PC-3 (cell line): ENCODE measurements at regions of chr4 and their contacts with region 1.

Region 1: DNA sequence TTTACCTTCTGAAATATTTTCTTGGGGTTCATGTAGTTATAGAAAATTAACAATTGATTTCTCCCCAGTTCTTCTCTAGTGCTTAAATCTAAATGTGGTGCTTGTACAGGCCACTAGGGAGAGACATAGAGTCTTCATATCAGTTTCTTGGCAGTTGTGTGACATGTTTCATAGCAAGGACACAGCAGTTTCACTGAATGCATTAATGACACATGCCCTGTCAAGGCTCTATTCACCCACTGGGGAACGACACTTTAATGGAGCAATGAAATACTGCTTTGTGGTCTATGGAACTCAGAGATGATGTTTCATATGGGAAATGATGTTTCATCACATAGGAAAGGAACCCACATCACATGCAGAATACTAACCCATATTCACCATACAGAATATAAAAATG is 2.8 kb downstream of the VEGFC start:
- DNase-seq: peak; percentile 89
- ATAC-seq: peak; percentile 27
- H3K4me3 ChIP-seq: peak overlapping the region; percentile 98
- H3K27ac ChIP-seq: peak overlapping the region; percentile 100
- H3K4me1 ChIP-seq: peaks cover 49% of the 10 kb centered on the region
- H3K27me3 ChIP-seq: no peaks in the 10 kb centered on the region
- CTCF ChIP-seq: peak; percentile 79

Region 2: DNA sequence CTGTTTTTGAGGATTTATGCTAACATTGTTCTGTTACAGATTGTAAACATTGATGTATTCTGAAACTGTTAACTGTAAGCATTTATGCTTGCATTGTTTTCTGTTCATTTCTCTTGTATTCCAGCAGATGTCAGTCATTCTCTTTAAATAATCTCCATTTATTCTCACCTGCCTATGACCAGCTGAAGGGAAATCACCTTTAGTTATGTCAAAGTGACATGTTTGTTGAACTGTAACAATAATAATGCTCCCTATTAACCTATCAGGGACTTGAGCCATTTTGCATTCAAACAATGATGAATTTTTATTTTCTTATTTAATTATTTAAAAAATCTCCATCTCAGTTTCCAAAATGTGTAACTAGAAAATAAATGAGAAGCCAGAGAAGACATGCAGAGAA is 412.2 kb before region 1 on chr4:
- CTCF ChIA-PET with region 1: no interaction called
- POLR2A ChIA-PET with region 1: no interaction called
- intact Hi-C with region 1: loop called (anchors 1 kb)
- DNase-seq: peak; percentile 59
- ATAC-seq: peak; percentile 63
- H3K4me3 ChIP-seq: no peak overlapping the region
- H3K27ac ChIP-seq: peak overlapping the region; percentile 56
- H3K4me1 ChIP-seq: peaks cover 13% of the 10 kb centered on the region; the same call in 1 of the 2 replicates
- H3K27me3 ChIP-seq: no peaks in the 10 kb centered on the region
- CTCF ChIP-seq: peak; percentile 71

Region 3: DNA sequence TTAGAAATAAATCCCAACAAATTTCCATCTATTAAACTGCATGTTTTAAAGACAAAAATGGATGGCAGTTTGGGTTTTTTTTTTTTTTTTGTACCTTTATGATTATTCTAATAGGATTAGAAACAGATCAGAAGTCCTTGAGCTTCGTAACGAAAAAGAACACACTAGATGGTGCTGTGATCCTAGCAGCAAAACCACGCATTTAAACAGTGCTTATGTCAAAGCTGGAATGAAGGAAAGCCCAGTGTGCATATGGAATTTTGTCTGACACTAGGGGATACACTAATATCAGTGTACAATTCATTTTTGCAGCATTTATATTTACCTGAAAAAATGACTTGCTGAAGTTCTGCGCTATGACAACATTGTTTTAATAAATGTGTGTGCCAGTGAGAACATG is 226.4 kb before region 1 on chr4:
- CTCF ChIA-PET with region 1: no interaction called
- POLR2A ChIA-PET with region 1: no interaction called
- intact Hi-C with region 1: loop called (anchors 5 kb)
- DNase-seq: peak; percentile 54
- ATAC-seq: peak; percentile 53
- H3K4me3 ChIP-seq: no peak overlapping the region
- H3K27ac ChIP-seq: no peak overlapping the region
- H3K4me1 ChIP-seq: peaks cover 14% of the 10 kb centered on the region
- H3K27me3 ChIP-seq: no peaks in the 10 kb centered on the region
- CTCF ChIP-seq: peak; percentile 46

Region 4: GRCh38 chr4:176883681-176884418 is 93.9 kb after region 1 on chr4:
- CTCF ChIA-PET with region 1: no interaction called
- POLR2A ChIA-PET with region 1: interaction called, 3 read pairs
- intact Hi-C with region 1: loop called (anchors 1 kb)
- DNase-seq: peak; percentile 93
- ATAC-seq: peak; percentile 77
- H3K4me3 ChIP-seq: peak overlapping the region; percentile 36
- H3K27ac ChIP-seq: peak overlapping the region; percentile 99
- H3K4me1 ChIP-seq: peaks cover 44% of the 10 kb centered on the region
- H3K27me3 ChIP-seq: no peaks in the 10 kb centered on the region
- CTCF ChIP-seq: no peak

Region 5: GRCh38 chr4:176988226-176988625 is 198.3 kb after region 1 on chr4:
- CTCF ChIA-PET with region 1: no interaction called
- POLR2A ChIA-PET with region 1: no interaction called
- intact Hi-C with region 1: loop called (anchors 2 kb)
- DNase-seq: peak; percentile 96
- ATAC-seq: peak; percentile 100
- H3K4me3 ChIP-seq: no peak overlapping the region
- H3K27ac ChIP-seq: peak overlapping the region; percentile 97
- H3K4me1 ChIP-seq: peaks cover 19% of the 10 kb centered on the region
- H3K27me3 ChIP-seq: no peaks in the 10 kb centered on the region
- CTCF ChIP-seq: no peak

Region 6: DNA sequence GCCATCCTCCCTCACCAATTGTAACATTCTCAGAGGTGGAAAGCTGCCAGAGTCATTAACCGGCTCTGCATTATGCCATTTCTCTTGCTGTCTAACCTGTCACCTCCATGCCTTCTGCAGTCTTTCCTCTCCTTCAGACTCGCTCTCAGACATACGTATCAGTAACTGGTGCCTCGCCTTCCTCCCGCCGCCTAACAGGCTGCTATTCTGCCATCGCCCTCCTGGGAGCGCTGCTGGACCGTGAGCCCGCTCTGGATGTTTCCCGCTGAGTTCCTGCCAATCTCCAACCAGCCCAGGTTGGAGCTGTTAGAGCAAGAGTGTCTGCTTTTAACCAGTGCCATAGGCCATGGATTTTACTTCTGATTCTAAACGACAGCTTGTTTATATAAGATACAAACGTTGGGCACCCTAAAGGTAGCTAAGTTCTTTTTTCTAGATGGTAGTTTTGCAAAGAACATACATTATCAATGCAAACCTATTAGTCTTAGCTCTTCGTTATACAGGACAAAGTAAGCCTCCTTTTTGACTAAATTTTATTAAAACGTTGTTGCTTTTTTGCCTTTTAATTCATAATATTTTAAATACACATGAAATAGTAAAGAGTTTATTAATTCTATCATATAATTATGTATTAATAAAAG is 460.2 kb after region 1 on chr4:
- CTCF ChIA-PET with region 1: no interaction called
- POLR2A ChIA-PET with region 1: no interaction called
- intact Hi-C with region 1: loop called (anchors 5 kb)
- DNase-seq: peak; percentile 69
- ATAC-seq: peak; percentile 88
- H3K4me3 ChIP-seq: no peak overlapping the region
- H3K27ac ChIP-seq: no peak overlapping the region
- H3K4me1 ChIP-seq: peaks cover 16% of the 10 kb centered on the region; the same call in 1 of the 2 replicates
- H3K27me3 ChIP-seq: no peaks in the 10 kb centered on the region
- CTCF ChIP-seq: peak; percentile 90

Region 7: GRCh38 chr4:177480795-177481194 is 690.8 kb after region 1 on chr4:
- CTCF ChIA-PET with region 1: no interaction called
- POLR2A ChIA-PET with region 1: no interaction called
- intact Hi-C with region 1: no loop called
- DNase-seq: no peak
- ATAC-seq: no peak
- H3K4me3 ChIP-seq: no peak overlapping the region
- H3K27ac ChIP-seq: no peak overlapping the region
- H3K4me1 ChIP-seq: peaks cover 13% of the 10 kb centered on the region
- H3K27me3 ChIP-seq: no peaks in the 10 kb centered on the region
- CTCF ChIP-seq: no peak